ENCODE measurements at regions of chr1 and their contacts with region 1.

Region 1: GRCh38 chr1:21937372-21938221 is 487 bp upstream of the HSPG2 start:
- DNase-seq: no peak
- H3K4me3 ChIP-seq: peak overlapping the region; percentile 43
- CTCF ChIP-seq: no peak

Region 2: DNA sequence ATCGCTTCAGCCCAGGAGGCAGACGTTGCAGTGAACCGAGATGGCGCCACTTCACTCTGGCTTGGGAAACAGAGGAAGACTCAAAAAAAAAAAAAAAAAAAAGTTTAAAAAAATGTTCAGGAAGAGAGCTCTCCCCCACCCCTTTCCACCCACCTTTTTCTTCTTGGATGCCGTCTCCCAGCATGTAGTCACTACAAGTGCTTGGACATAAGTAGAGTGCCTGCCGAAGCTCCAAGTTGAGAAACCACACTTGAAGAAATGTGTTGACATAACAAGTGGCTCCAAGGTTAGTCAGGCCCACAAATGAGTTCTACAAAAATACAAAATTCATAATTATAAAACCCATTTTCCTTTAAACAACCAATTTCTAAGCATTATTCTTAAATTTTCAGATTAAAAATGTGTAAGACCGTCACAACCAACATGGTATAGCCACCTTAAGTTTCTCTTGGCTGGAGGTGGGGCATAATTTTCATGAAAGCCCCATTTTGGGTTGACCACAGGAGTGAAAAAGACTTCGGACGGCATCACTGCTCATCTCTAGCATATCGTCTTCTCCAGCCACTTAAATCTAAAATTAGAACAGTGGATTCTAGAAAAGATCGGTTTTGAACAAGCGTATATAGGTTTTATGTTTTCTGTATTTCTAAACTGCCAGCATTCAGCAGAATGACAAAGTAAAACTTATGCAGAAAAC is 181.1 kb before region 1 on chr1:
- CTCF ChIA-PET with region 1: no interaction called
- POLR2A ChIA-PET with region 1: no interaction called
- DNase-seq: no peak
- H3K4me3 ChIP-seq: no peak overlapping the region
- CTCF ChIP-seq: no peak

Region 3: DNA sequence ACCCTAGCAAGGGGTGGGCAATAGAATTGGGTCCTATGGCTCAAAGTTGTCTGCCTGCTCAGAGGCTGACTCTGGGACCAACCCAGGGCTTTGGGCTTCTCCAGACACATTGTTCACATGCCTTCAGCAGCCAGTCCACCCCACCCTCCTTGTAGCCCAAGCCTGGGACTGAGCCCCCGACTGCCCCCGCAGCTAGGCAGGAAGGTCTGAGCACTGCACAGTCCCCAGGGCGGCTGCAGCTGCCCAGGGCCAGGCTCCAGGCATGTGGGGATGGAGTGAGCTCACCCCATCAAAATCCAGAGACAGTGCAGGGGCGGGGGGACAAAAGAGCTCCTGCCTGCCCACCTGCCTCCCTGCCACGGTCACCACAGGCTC is 36.1 kb before region 1 on chr1:
- CTCF ChIA-PET with region 1: interaction called, 15 read pairs
- POLR2A ChIA-PET with region 1: interaction called, 4 read pairs
- DNase-seq: no peak
- H3K4me3 ChIP-seq: no peak overlapping the region
- CTCF ChIP-seq: peak; percentile 17

Region 4: DNA sequence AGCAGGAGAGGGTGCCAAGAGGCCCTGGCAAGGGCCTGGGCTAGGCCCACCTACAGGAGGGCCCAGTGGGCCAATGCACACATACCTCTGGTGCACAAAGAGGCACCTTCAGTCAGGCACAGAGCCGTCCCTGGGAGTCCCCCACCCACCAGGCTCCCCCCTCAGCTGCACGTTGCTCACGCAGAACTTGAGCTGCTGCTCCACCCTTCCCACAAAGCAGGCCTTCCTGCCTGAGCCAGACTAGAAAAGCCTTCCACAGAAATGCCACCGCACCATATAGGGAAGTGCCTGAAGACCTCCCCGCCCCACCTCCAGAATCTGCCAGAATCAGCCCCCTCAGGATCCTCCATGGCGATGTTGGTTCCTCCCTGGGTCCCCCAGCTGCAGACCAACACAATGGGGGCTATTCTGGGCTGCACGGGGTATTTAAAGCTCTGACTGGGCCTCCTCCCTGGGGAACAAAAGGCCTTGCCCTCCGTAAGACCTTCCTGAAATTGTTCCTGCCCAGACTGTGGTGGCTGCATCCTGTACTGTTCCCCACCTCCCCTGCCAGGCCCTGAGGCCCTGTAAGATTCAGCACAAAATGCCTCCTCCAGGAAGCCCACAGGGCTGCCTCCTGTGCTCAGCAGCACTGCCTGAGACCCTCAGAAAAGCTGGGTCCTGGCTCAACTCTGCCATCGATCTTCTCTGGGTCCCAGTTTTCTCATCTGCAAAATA is 27.7 kb before region 1 on chr1:
- CTCF ChIA-PET with region 1: interaction called, 16 read pairs
- POLR2A ChIA-PET with region 1: interaction called, 4 read pairs
- DNase-seq: no peak
- H3K4me3 ChIP-seq: no peak overlapping the region
- CTCF ChIP-seq: no peak

Region 5: GRCh38 chr1:21919520-21919919 is 18.1 kb before region 1 on chr1:
- CTCF ChIA-PET with region 1: interaction called, 14 read pairs
- POLR2A ChIA-PET with region 1: interaction called, 12 read pairs
- DNase-seq: no peak
- H3K4me3 ChIP-seq: no peak overlapping the region
- CTCF ChIP-seq: no peak

Region 6: DNA sequence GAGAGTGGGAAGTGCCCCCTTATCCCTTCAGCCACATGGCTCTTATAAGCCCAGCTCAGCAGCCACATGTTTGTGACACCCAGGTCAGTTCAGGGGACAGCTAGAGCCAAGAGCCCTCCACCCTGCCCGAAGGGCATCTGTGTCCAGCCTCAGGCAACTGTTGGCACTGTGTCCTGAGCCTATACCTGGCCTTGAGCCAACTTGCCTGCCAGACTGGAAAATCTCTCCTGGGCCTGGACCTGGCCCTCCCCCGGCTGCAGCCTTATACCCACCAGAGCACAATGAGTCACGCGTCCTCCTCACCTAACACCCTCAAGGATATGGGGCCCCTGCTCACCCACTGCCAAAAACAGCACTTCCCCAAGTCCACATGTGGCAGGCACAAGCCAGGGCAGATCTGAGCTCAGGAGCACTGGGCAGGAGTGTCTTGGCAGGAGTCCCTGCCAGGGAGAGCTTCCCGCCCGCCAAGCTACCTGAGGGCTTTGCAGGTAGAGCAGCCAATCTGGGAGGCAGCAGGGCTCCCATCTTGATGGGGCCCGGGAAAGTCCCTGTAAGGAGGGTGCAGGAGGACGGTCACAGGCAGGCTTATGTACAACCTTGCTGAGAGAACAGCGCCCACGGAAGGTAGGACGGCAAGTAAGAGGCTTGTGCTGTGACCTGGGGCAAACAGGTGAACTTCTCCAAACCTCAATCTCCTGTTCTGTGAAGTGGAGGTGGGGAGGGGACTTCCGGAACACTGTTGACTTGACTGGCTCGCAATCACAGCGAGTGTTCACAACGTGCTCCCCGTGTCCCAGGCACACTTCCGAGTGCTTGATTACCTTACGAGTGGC is 19.3 kb after region 1 on chr1:
- CTCF ChIA-PET with region 1: interaction called, 29 read pairs
- POLR2A ChIA-PET with region 1: interaction called, 6 read pairs
- DNase-seq: no peak
- H3K4me3 ChIP-seq: no peak overlapping the region
- CTCF ChIP-seq: no peak

Region 7: GRCh38 chr1:22229374-22229773 is 291.8 kb after region 1 on chr1:
- CTCF ChIA-PET with region 1: no interaction called
- POLR2A ChIA-PET with region 1: no interaction called
- DNase-seq: no peak
- H3K4me3 ChIP-seq: no peak overlapping the region
- CTCF ChIP-seq: no peak